Activated naive CD4-positive, alpha-beta T cell treated with anti-CD3 and anti-CD28 coated beads for 36 hours (primary cell): ENCODE measurements at regions of chr5 and their contacts with region 1.

Region 1: DNA sequence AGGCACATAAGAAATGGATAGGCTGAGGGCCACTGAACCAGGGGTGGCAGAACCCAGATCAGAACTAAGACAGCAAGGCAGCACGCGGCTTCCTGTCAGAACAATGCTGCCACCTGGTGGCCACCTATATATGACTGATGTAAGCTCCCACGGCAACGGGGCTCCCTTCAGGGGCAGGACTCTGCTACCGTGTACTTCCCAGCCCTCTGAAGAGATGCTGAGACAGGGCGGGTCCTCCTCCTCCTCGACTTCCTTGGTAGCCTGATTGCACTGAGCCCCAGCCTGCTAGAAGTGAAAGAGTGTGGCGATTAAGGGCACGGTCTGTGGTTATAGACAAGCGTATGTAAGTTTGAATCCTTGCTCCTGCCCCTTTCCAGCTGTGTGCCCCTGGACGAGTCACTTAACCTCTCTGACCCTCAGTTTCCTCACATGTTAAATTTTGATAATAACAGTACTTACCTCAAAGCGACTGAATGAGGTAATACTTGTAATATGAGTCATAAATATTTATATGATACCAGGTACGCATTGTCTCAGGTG is 13.3 kb downstream of the RPS14 start:
- DNase-seq: peak; percentile 95
- H3K4me3 Mint-ChIP-seq: no peak overlapping the region
- H3K27ac Mint-ChIP-seq: no peak overlapping the region
- H3K4me1 Mint-ChIP-seq: peaks cover 8% of the 10 kb centered on the region
- H3K27me3 Mint-ChIP-seq: no peaks in the 10 kb centered on the region

Region 2: DNA sequence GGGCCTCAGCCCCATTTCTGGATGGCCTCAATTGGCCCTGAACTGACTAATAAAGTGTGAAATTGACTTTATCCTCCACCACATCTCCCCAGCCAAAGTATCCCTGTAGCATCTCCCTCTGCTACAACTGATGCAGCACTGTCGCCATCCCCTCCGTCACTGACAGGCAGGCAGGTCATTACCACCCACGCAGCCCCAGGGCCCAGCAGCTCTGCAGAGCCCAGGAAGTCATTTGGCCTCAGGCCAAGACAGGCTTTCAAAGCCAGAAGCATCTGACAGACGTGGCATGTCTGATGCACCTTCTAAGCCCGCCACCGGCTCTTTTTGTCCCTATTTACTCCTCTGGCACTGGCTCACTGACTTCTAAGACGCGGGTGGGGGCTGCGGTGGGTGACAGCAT is 789.6 kb before region 1 on chr5:
- CTCF ChIA-PET with region 1: no interaction called
- intact Hi-C with region 1: no loop called
- DNase-seq: peak; percentile 60
- H3K4me3 Mint-ChIP-seq: no peak overlapping the region
- H3K27ac Mint-ChIP-seq: no peak overlapping the region
- H3K4me1 Mint-ChIP-seq: peaks cover 6% of the 10 kb centered on the region
- H3K27me3 Mint-ChIP-seq: no peaks in the 10 kb centered on the region

Region 3: DNA sequence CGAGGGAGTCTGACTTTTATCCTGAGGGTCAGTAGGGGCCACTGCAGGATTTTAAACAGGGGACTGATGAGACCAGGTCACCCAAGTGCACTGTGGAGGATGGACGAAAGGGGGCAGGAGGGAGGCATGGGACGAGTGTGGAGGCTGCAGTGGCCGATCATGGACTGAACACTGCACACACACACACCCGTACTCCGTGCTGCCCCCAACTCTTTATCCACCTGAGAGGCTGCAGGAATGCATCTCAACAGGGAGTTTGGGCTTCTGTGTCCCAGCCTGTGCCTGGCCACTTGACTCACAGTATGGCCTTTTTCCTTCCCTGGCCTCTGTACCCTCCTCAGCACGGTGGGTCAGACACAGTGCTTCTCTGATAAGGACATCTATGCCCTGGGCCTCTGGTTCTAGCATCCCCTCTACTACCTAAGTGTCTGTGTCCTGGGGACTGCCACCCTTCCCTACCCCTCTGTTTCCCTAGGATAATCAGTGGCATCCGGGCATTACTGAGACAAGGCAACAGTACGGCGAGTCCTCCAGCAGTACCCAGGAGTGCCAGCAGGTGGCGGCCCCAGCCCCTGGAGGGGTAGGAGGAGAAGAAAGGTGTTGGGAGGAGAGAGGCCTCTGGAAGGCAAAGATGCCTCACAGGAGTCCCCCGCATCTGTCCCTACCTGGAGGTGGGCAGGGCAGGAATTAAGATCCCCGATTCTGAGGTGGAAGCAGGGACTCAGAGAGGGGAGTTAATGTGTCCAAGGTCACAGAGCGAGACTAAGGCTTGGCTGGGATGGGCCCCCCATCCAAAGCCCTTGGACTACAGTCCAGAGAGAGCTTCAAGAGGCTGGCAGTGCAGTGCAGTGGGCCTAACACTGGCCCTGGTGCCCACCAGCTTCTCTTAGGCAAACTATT is 274.7 kb before region 1 on chr5:
- CTCF ChIA-PET with region 1: interaction called, 4 read pairs
- intact Hi-C with region 1: loop called (anchors 1 kb)
- DNase-seq: peak; percentile 87
- H3K4me3 Mint-ChIP-seq: no peak overlapping the region
- H3K27ac Mint-ChIP-seq: no peak overlapping the region
- H3K4me1 Mint-ChIP-seq: no peaks in the 10 kb centered on the region
- H3K27me3 Mint-ChIP-seq: peaks cover 17% of the 10 kb centered on the region

Region 4: DNA sequence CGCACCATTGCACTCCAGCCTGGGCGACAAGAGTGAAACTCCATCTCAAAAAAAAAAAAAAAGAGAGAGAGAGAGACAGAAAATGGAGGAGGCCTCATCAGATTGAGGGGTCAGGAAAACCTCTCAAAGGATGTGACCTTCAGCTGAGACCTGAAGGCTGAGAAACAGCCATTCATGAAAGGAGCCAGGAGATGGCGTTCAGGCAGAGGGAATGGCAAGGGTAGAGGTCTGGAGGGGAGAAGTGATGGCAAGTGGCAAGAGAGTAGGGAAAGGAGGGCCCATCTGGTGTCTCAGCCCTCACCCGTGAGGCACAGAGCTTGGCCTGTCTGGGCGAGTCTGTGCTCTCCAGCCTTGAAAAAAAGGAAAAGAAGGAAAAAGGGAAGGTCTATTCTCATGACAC is 163.7 kb before region 1 on chr5:
- CTCF ChIA-PET with region 1: no interaction called
- intact Hi-C with region 1: loop called (anchors 1 kb)
- DNase-seq: peak; percentile 32
- H3K4me3 Mint-ChIP-seq: no peak overlapping the region
- H3K27ac Mint-ChIP-seq: no peak overlapping the region
- H3K4me1 Mint-ChIP-seq: no peaks in the 10 kb centered on the region
- H3K27me3 Mint-ChIP-seq: no peaks in the 10 kb centered on the region

Region 5: GRCh38 chr5:150357326-150358260 is 78.6 kb before region 1 on chr5 and contains the start of gene TCOF1:
- CTCF ChIA-PET with region 1: no interaction called
- intact Hi-C with region 1: loop called (anchors 2 kb)
- DNase-seq: peak; percentile 98
- H3K4me3 Mint-ChIP-seq: peak within 1 kb of the TSS; percentile 87
- H3K27ac Mint-ChIP-seq: peak within 1 kb of the TSS; percentile 82
- H3K4me1 Mint-ChIP-seq: peaks cover 41% of the 10 kb centered on the region
- H3K27me3 Mint-ChIP-seq: no peaks in the 10 kb centered on the region
- total RNA-seq, gene TCOF1: 114 to 115 TPM

Region 6: DNA sequence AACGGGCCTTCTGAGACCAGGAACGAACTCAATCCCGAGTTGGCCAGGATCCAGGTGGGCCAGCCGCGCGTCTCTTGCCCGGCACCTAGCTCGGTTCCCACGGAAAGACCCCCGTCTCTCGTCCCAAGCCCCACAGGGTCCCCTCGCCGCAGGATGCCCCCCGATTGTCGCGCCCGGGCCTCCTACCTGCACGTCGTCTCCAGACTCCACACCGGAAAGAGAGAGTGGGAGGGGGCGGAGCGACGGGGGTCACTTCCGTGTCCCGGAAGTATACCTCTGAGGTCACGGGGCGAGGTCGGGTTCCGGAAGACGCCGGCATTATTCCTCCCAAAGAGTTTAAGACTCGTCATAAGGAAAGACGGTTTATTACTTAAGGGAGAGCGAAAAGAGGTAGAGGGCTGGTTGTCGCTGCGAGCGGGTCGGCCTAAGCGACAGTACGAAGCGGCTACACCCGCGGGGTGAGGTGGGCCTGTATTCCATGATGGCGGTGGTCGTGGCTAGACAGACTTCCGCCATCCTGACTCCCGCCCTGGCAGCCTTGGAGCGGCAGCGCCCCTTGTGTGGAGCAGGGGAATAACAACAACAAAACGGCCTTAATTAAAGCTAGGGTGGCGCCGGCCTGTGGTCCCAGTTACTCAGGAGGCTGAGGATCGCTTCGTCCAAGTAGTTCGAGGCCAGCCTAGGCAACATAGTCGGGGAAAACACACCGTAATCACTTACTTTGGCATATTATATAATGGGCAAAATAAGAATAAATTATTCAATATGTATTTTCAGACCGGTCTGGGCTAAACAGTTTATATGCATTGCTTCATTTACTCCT is 13.5 kb after region 1 on chr5 and contains the start of gene RPS14:
- CTCF ChIA-PET with region 1: interaction called, 16 read pairs
- intact Hi-C with region 1: no loop called
- DNase-seq: peak; percentile 97
- H3K4me3 Mint-ChIP-seq: peak within 1 kb of the TSS; percentile 93
- H3K27ac Mint-ChIP-seq: peak within 1 kb of the TSS; percentile 99
- H3K4me1 Mint-ChIP-seq: peaks cover 33% of the 10 kb centered on the region
- H3K27me3 Mint-ChIP-seq: no peaks in the 10 kb centered on the region
- total RNA-seq, gene RPS14: 4,594 to 4,738 TPM

Region 7: DNA sequence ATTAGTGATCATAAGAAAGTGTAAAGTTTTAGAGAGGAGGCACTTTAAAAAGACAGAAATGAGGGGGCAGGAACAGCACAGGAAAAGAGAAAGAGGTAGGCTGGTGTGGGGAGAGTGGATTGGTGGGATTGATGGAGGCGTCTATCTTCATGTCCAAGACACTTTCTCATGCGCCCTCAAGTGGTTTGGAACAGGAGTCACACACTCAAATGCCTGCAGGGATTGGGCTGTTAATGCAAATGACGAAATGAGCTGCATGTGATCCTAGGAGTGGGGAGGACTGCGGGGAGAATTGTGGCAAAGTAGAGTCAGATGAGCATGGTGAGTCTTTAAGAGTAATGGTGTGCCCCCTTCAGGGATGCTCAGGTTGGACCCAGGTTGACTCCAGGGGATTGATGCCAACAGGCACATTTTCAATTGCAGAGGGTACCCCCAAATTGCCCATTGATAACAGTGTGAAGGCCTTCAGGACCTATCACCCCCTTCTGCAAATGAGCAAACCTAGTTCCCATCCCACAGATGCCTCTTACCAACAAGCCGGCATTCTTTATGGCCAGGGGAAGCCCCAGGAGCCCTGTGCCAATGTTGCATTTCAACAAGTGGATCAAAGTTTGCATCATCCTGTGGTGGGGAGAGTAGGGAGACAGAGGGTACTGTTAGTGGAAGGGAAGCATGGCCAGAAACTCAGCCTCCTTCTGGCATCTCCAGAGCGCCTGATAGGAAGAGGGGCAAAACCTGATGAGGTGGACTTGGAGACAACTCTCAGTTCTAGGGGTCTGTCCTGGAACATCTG is 862.0 kb after region 1 on chr5:
- CTCF ChIA-PET with region 1: no interaction called
- intact Hi-C with region 1: no loop called
- DNase-seq: peak; percentile 46
- H3K4me3 Mint-ChIP-seq: no peak overlapping the region
- H3K27ac Mint-ChIP-seq: no peak overlapping the region
- H3K4me1 Mint-ChIP-seq: no peaks in the 10 kb centered on the region
- H3K27me3 Mint-ChIP-seq: peaks cover 3% of the 10 kb centered on the region